WTC11 (cell line): ENCODE measurements at regions of chr6 and their contacts with region 1.

Region 1: GRCh38 chr6:157335829-157336228 is 12.5 kb upstream of the TMEM242 start:
- DNase-seq: no peak
- ATAC-seq: peak; percentile 65
- H3K4me3 Mint-ChIP-seq: no peak overlapping the region
- H3K27ac Mint-ChIP-seq: no peak overlapping the region
- H3K4me1 Mint-ChIP-seq: no peaks in the 10 kb centered on the region
- H3K27me3 Mint-ChIP-seq: peaks cover 2% of the 10 kb centered on the region; the same call in 1 of the 2 replicates
- CTCF ChIP-seq: no peak

Region 2: GRCh38 chr6:157158897-157159296 is 176.9 kb before region 1 on chr6:
- CTCF ChIA-PET with region 1: no interaction called
- POLR2A ChIA-PET with region 1: no interaction called
- DNase-seq: no peak
- ATAC-seq: peak; percentile 68
- H3K4me3 Mint-ChIP-seq: no peak overlapping the region
- H3K27ac Mint-ChIP-seq: peak overlapping the region; percentile 69
- H3K4me1 Mint-ChIP-seq: peaks cover 49% of the 10 kb centered on the region
- H3K27me3 Mint-ChIP-seq: no peaks in the 10 kb centered on the region
- CTCF ChIP-seq: no peak

Region 3: GRCh38 chr6:157240059-157240959 is 95.5 kb before region 1 on chr6:
- CTCF ChIA-PET with region 1: no interaction called
- POLR2A ChIA-PET with region 1: no interaction called
- DNase-seq: no peak
- ATAC-seq: no peak
- H3K4me3 Mint-ChIP-seq: no peak overlapping the region
- H3K27ac Mint-ChIP-seq: no peak overlapping the region
- H3K4me1 Mint-ChIP-seq: peaks cover 24% of the 10 kb centered on the region
- H3K27me3 Mint-ChIP-seq: peaks cover 18% of the 10 kb centered on the region
- CTCF ChIP-seq: no peak

Region 4: DNA sequence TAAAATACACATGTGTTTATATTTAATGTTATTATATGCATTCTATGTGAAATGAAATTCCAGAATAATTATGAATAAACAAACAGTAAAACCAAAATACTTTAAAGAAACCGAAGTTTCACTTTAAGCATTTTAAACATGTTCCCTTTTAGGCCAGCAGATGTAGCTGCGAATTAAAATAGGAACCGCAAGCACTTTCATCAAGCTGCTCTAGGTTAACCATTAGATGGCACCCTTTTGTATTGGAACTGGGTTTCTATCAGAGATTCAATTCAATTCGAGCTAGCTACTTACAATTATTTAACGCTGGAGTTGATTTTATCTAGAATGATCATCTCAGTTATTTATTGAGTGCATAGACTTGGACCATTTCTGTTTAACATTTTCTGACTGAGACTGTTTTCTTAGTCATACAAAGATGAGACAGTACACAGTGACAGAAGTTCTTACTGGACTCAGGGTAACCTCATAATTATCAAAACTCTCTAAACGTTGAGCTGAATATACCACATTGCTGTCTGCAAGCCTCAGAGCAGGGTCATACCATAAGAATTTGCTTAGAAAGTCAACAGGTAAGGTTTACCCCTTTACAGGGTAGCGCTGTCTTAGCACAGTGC is 21.0 kb before region 1 on chr6:
- CTCF ChIA-PET with region 1: interaction called, 17 read pairs
- POLR2A ChIA-PET with region 1: no interaction called
- DNase-seq: no peak
- ATAC-seq: peak; percentile 80
- H3K4me3 Mint-ChIP-seq: no peak overlapping the region
- H3K27ac Mint-ChIP-seq: no peak overlapping the region
- H3K4me1 Mint-ChIP-seq: no peaks in the 10 kb centered on the region
- H3K27me3 Mint-ChIP-seq: no peaks in the 10 kb centered on the region
- CTCF ChIP-seq: 0 out of 2 replicates have a peak, but pooled peaks have one; percentile 20

Region 5: GRCh38 chr6:157323255-157323965 is 12.4 kb before region 1 on chr6 and contains the start of gene TMEM242:
- CTCF ChIA-PET with region 1: interaction called, 45 read pairs
- POLR2A ChIA-PET with region 1: interaction called, 12 read pairs
- DNase-seq: peak; percentile 93
- ATAC-seq: peak; percentile 95
- H3K4me3 Mint-ChIP-seq: peak within 1 kb of the TSS; percentile 98
- H3K27ac Mint-ChIP-seq: peak within 1 kb of the TSS; percentile 97
- H3K4me1 Mint-ChIP-seq: 0 out of 2 replicates have a peak, but pooled peaks cover 7% of the 10 kb centered on the region
- H3K27me3 Mint-ChIP-seq: peaks cover 16% of the 10 kb centered on the region
- CTCF ChIP-seq: no peak
- total RNA-seq, gene TMEM242: 8.7 to 11.5 TPM (median 11.0 TPM) in 3 replicates